ENCODE measurements at regions of chr18 and their contacts with region 1.

Region 1: GRCh38 chr18:12092398-12093229 is 1.0 kb upstream of the ANKRD62 start:
- DNase-seq: peak; percentile 63
- H3K4me3 ChIP-seq: no peak overlapping the region
- H3K27ac ChIP-seq: no peak overlapping the region
- H3K4me1 ChIP-seq: no peaks in the 10 kb centered on the region
- H3K27me3 ChIP-seq: no peaks in the 10 kb centered on the region
- CTCF ChIP-seq: peak; percentile 29 to 68 (median 46)
- EP300 ChIP-seq: no peak
- POLR2A ChIP-seq: no peak

Region 2: DNA sequence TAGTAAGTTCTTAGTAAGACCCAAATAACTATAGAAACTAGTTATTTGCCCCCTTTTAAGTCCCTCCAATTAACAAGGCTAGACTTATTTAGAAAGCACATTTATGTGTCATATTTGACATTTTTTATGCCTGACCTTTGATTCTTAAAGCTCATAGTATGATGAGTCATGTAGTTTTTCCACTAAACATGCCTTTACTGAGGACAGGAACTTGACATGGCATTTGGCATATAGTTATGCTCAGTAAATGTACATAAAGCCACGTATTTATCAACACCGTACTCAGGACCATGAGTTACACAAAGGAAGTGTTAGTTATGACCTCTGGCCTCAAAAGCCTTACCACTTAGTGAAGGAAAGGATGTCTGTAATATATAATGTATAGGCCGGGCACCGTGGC is 324.7 kb before region 1 on chr18:
- in situ Hi-C with region 1: no loop called
- intact Hi-C with region 1: no loop called
- DNase-seq: no peak
- H3K4me3 ChIP-seq: no peak overlapping the region
- H3K27ac ChIP-seq: no peak overlapping the region
- H3K4me1 ChIP-seq: no peaks in the 10 kb centered on the region
- H3K27me3 ChIP-seq: no peaks in the 10 kb centered on the region
- CTCF ChIP-seq: no peak
- EP300 ChIP-seq: no peak
- POLR2A ChIP-seq: no peak

Region 3: DNA sequence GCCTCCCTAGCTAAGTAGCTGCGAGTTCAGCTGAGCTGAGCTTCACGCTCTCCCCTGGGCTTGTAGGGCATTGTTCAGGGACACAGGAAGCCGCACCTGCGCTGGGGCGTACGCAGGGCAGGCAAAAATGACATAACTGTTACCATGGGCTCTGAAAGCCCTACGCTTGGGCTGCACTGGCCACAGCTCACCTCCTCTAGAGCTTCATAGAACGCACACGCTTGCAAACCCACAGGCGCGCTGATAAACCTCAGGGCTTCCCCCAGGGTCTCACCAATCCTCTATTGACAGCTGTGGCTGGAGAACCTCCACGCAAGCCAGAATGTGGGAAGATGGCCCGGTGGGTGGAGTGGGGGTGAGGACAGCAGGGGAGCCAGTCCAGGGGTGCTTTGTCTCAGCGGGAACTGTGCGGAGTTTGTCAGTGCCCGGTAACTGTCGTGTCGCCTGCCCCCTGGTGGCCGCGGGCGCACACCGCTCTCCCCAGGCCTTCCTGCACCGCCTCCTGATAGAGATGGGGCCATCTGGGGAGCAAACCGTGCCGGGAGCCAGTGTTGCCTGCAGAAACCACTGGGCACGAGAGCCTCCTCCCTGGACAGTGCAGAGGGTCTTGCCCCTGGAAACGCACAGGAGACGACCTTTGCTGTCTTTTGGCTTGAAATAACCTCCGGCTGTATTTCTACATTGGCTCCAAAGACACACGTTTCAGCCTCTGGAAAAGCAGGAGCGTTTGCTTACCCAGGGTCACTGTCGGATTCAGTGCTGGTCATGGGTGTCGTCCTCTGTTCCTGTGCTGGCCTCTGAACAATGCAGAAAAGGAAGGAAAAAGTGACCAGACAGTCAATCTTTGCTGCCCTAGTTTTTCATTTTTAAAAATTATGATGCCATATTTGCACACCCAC is 144.6 kb after region 1 on chr18:
- in situ Hi-C with region 1: loop called in 2 of 4 experiments (anchors 10 kb)
- intact Hi-C with region 1: no loop called
- DNase-seq: peak; percentile 74
- H3K4me3 ChIP-seq: no peak overlapping the region
- H3K27ac ChIP-seq: no peak overlapping the region
- H3K4me1 ChIP-seq: no peaks in the 10 kb centered on the region
- H3K27me3 ChIP-seq: no peaks in the 10 kb centered on the region
- CTCF ChIP-seq: peak; percentile 74 to 93 (median 89)
- EP300 ChIP-seq: no peak
- POLR2A ChIP-seq: no peak

Region 4: GRCh38 chr18:12246849-12247808 is 154.5 kb after region 1 on chr18:
- in situ Hi-C with region 1: loop called in 1 of 4 experiments (anchors 10 kb)
- intact Hi-C with region 1: no loop called
- DNase-seq: no peak
- H3K4me3 ChIP-seq: no peak overlapping the region
- H3K27ac ChIP-seq: no peak overlapping the region
- H3K4me1 ChIP-seq: no peaks in the 10 kb centered on the region
- H3K27me3 ChIP-seq: peaks cover 17% of the 10 kb centered on the region
- CTCF ChIP-seq: no peak
- EP300 ChIP-seq: no peak
- POLR2A ChIP-seq: no peak